ENCODE measurements at regions of chr11 and their contacts with region 1.

Region 1: DNA sequence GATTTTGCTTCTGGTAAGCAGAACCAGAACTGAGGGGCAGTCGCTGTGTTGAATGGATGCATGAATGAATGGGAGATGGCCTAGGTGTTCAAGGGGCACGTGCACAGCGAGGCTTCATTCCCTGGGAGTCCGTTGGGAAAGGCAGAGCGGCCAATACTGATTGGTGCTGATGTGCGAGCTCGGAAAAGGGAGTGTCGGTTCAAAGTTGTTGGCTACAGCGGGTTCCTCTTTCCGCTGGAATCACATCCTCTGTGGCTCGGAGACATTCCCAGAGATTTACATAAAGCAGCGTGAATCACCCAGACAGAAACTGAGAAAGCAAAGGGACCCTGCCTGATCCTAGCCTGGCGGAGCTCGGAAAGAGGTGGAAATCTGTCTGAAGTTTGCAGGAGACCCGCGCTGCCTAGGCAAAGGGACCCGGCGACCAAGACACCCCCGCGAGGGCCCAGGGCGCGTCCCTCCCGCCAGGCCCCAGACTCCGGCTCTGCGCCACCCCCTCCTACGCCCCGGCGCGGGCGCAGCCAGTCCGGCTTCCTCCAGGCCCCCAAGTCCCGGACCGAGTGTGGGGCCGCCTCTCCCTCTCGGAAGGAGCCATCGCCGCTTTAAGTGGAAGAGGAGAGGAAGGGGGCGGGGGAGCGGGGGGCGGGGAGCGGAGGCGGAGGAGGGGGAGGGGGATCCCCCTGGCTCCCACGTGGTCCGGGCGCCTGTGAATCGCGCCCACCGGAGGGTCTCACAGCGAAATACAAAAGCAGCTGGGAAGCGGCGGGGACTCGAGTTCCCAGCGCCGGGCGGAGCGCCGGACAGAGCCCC is at the start of gene FJX1:
- DNase-seq: peak; percentile 86 to 94 (median 89)
- H3K4me3 ChIP-seq: peak within 1 kb of the TSS; percentile 58 to 66 (median 63)
- H3K27ac ChIP-seq: peak within 1 kb of the TSS; percentile 6 to 45
- H3K4me1 ChIP-seq: peaks cover 0 to 14% (median 5%) of the 10 kb centered on the region in 3 donors
- H3K27me3 ChIP-seq: no peaks in the 10 kb centered on the region
- CTCF ChIP-seq: no peak
- total RNA-seq, gene FJX1: 7.9 TPM

Region 2: GRCh38 chr11:35485656-35486322 is 132.1 kb before region 1 on chr11:
- intact Hi-C with region 1: no loop called
- DNase-seq: peak; percentile 83 to 92 (median 85)
- H3K4me3 ChIP-seq: no peak overlapping the region
- H3K27ac ChIP-seq: no peak overlapping the region
- H3K4me1 ChIP-seq: no peaks in the 10 kb centered on the region
- H3K27me3 ChIP-seq: no peaks in the 10 kb centered on the region
- CTCF ChIP-seq: peak; percentile 79

Region 3: GRCh38 chr11:36265793-36266628 is 648.1 kb after region 1 on chr11:
- intact Hi-C with region 1: loop called (anchors 5 kb)
- DNase-seq: peak in 4 of 5 donors; percentile 73 to 87 (median 82)
- H3K4me3 ChIP-seq: no peak overlapping the region
- H3K27ac ChIP-seq: no peak overlapping the region
- H3K4me1 ChIP-seq: peaks cover 0 to 5% (median 2%) of the 10 kb centered on the region in 3 donors
- H3K27me3 ChIP-seq: no peaks in the 10 kb centered on the region
- CTCF ChIP-seq: peak; percentile 89

Measured in kidney (tissue), 22 donors.